MCF 10A (cell line): ENCODE measurements at regions of chr13 and their contacts with region 1.

Region 1: DNA sequence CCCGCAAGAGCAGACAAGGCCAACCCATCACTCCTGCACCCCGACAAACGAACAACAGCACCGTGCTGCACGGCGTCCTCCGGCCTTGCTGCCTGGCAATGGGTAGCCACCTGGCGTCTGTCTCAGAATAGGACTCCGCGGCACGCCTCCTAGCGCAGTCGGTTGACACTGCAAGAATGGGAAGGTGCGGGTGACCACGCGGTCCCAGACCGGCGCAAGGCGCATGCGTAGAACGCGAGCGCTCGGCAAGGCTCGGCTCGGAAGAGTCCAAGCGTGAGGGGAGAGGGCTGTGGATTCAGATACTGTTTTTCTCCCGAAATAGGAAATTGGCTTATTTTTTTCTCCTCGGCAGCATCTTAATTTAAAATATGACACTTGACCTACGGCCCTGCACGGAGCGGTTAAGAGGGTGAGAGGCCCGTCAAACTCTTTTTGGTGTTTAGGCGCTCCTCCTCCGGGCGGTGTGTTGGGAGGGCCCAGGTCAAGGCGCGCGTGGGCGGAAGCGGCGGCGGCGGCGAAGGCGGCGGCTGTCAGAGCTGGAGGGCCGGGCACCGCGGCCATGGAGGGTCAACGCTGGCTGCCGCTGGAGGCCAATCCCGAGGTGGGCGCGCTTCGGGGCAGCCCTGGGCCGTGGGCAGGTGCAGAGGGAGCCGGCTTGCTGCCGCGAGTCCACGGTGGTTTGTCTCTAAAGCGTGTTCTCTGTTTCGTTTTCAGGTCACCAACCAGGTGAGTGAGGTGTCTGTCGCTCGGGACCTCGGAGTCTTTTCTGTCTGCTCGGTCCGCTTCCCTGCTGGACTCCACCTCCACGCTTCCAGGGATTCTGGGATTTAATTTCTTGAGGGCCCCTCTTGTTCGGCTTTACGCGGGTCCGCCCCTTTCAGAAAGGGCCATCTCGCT is at the start of gene UCHL3:
- DNase-seq: peak; percentile 96
- H3K4me3 Mint-ChIP-seq: peak within 1 kb of the TSS; percentile 86
- H3K27ac Mint-ChIP-seq: peak within 1 kb of the TSS; percentile 98
- H3K4me1 Mint-ChIP-seq: peaks cover 32% of the 10 kb centered on the region
- H3K27me3 Mint-ChIP-seq: no peaks in the 10 kb centered on the region
- CTCF ChIP-seq: peak; percentile 81
- total RNA-seq, gene UCHL3: 49.9 and 79.3 TPM in 2 replicates

Region 2: DNA sequence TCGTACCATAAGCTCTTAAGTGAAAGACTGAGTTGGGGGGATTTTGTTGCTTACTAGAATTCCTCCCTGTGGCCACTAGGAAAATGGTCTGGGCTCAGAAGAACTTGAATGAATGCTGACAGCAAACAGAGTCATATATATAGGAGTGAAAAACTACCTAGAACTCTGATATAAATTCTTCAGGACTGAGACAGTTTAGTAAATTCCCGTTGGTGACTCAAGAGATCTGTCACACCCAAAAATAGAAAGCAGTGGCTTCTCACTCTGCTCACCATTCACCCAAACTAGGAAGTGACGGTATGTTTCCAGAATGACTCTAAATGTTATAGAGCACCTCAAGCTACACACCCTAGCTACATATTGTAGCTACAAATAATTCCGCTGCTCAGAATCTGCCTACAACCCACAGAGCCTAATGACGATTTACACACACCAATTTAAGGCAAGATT is 183.8 kb before region 1 on chr13:
- CTCF ChIA-PET with region 1: interaction called, 14 read pairs
- POLR2A ChIA-PET with region 1: interaction called, 13 read pairs
- intact Hi-C with region 1: no loop called
- DNase-seq: peak; percentile 69
- H3K4me3 Mint-ChIP-seq: peak overlapping the region; percentile 44
- H3K27ac Mint-ChIP-seq: peak overlapping the region; percentile 82
- H3K4me1 Mint-ChIP-seq: peaks cover 40% of the 10 kb centered on the region
- H3K27me3 Mint-ChIP-seq: no peaks in the 10 kb centered on the region
- CTCF ChIP-seq: peak; percentile 9

Region 3: GRCh38 chr13:75372517-75372916 is 177.0 kb before region 1 on chr13:
- CTCF ChIA-PET with region 1: interaction called, 14 read pairs
- POLR2A ChIA-PET with region 1: no interaction called
- intact Hi-C with region 1: loop called (anchors 2 kb)
- DNase-seq: peak; percentile 66
- H3K4me3 Mint-ChIP-seq: no peak overlapping the region
- H3K27ac Mint-ChIP-seq: no peak overlapping the region
- H3K4me1 Mint-ChIP-seq: peaks cover 13% of the 10 kb centered on the region
- H3K27me3 Mint-ChIP-seq: no peaks in the 10 kb centered on the region
- CTCF ChIP-seq: peak; percentile 58

Region 4: GRCh38 chr13:75537401-75538365 is 11.8 kb before region 1 on chr13 and contains the start of gene COMMD6:
- CTCF ChIA-PET with region 1: interaction called, 5 read pairs
- POLR2A ChIA-PET with region 1: interaction called, 40 read pairs
- intact Hi-C with region 1: loop called (anchors 1 kb)
- DNase-seq: peak; percentile 94
- H3K4me3 Mint-ChIP-seq: peak within 1 kb of the TSS; percentile 93
- H3K27ac Mint-ChIP-seq: peak within 1 kb of the TSS; percentile 92
- H3K4me1 Mint-ChIP-seq: peaks cover 32% of the 10 kb centered on the region
- H3K27me3 Mint-ChIP-seq: no peaks in the 10 kb centered on the region
- CTCF ChIP-seq: no peak
- total RNA-seq, gene COMMD6: 132 TPM in 2 replicates

Region 5: GRCh38 chr13:75569576-75569975 is 20.1 kb after region 1 on chr13:
- CTCF ChIA-PET with region 1: interaction called, 3 read pairs
- POLR2A ChIA-PET with region 1: interaction called, 15 read pairs
- intact Hi-C with region 1: no loop called
- DNase-seq: no peak
- H3K4me3 Mint-ChIP-seq: no peak overlapping the region
- H3K27ac Mint-ChIP-seq: peak overlapping the region; percentile 8
- H3K4me1 Mint-ChIP-seq: peaks cover 16% of the 10 kb centered on the region
- H3K27me3 Mint-ChIP-seq: no peaks in the 10 kb centered on the region
- CTCF ChIP-seq: no peak

Region 6: DNA sequence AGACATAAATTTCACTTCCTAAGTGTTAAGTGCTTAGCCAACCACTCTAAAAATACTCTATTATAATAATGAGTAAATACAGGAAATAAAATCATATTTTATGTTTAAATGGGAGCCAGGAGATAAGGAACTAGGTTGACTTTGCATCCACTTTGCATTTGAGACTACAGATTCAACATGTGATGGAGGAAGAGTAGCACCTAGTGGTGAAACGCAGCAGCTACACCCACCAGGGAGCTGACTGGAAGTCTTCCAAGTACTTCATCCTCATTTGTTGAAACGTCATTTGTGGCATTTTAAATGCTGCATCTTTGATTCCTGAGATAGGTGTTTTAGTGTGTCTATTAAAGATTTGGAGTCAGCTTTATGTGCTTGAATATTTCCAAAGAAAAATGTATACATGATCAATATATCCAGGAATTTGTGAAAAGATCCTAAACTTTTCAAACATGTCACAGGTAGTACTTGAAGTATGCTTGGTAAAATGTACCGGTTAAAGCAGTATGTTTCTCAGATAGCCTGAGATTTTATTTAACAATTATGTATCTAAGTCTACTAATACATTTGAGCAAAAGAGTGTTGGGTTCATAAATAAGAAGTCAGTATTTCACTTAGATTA is 1354.1 kb after region 1 on chr13:
- CTCF ChIA-PET with region 1: no interaction called
- POLR2A ChIA-PET with region 1: no interaction called
- intact Hi-C with region 1: no loop called
- DNase-seq: peak; percentile 79
- H3K4me3 Mint-ChIP-seq: no peak overlapping the region
- H3K27ac Mint-ChIP-seq: no peak overlapping the region
- H3K4me1 Mint-ChIP-seq: peaks cover 9% of the 10 kb centered on the region
- H3K27me3 Mint-ChIP-seq: no peaks in the 10 kb centered on the region
- CTCF ChIP-seq: peak; percentile 98